ENCODE measurements at regions of chr12 and their contacts with region 1.

Region 1: DNA sequence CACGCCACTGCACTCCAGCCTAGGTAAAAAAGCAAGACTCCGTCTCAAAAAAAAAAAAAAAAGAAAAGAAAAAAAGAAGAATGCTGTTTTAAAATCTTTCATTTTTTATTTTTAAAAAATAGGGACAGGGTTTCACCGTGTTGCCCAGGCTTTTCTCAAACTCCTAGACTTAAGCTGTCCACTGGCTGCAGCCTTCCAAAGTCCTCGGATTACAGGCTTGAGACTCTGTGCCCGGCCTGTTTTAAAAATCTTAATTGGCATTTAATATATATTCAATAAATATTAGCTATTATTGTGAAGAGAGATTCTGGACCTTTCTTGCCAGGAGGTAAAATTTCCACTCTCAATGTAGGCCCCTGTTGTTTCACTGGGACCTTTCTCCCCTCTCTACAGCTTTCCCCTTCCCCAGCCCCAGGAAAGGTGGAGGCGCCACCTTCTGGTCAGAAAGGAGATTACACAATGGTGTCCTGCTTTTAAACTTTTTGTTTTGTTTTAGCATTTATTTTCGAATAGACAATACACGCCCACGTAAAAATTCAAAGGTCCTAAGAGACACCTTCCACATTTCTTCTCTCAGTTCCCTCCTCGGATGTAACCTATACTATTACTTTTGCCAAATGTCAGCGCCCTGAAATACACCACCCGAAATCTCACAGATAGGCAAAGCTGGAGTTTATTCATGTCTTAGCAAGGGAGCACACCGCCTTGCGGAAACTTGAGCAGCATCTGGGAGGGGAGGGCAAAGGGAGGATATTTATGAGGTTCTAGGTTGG is 23.8 kb upstream of the PHC1 start:
- DNase-seq: peak; percentile 17
- H3K4me3 ChIP-seq: peak overlapping the region; percentile 47 to 69 (median 48)
- H3K27ac ChIP-seq: no peak overlapping the region
- H3K4me1 ChIP-seq: no peaks in the 10 kb centered on the region
- H3K27me3 ChIP-seq: no peaks in the 10 kb centered on the region
- CTCF ChIP-seq: peak; percentile 63 to 84

Region 2: DNA sequence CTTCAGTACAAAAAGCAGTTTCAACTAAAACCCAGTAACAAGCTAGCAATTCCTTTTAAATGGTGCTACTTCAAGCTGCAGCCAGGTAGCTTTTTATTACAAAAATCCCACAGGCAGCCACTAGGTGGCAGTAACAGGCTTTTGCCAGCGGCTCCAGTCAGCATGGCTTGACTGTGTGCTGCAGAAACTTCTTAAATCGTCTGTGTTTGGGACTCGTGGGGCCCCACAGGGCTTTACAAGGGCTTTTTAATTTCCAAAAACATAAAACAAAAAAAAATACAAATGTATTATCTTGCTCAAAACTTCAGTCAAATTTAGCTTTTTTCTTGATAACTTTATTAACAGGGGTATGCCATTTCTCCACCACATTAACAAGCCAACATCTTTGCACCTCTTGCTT is 346.2 kb before region 1 on chr12:
- CTCF ChIA-PET with region 1: no interaction called
- dilution Hi-C with region 1: no loop called
- in situ Hi-C with region 1: no loop called
- intact Hi-C with region 1: loop called (anchors 1 kb)
- DNase-seq: peak; percentile 44
- H3K4me3 ChIP-seq: no peak overlapping the region
- H3K27ac ChIP-seq: no peak overlapping the region
- H3K4me1 ChIP-seq: no peaks in the 10 kb centered on the region
- H3K27me3 ChIP-seq: no peaks in the 10 kb centered on the region
- CTCF ChIP-seq: peak; percentile 74 to 85

Region 3: DNA sequence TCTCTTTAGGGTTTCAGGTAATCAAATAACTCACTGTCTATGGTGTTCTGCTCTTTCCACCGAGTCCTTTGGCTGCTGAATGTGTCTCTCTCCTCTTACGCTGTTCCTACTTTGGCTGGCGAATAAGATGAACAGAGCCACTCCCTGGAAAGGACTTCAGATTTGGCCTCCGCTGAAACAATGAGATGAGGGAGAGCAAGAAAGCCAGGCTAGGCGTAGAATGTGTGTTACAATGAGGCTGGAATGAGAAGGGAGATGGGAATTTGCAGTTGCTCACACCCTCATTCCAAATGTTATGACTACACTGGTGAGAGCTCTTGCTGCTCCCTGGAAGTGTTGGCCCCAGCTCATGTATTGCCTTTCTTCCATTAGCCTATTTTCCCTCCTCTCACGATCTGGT is 227.9 kb before region 1 on chr12 and contains the start of gene MFAP5:
- CTCF ChIA-PET with region 1: interaction called, 11 read pairs
- dilution Hi-C with region 1: no loop called
- in situ Hi-C with region 1: no loop called
- intact Hi-C with region 1: loop called (anchors 1 kb)
- DNase-seq: no peak
- H3K4me3 ChIP-seq: no peak within 1 kb of the TSS
- H3K27ac ChIP-seq: no peak within 1 kb of the TSS
- H3K4me1 ChIP-seq: peaks cover 21% of the 10 kb centered on the region
- H3K27me3 ChIP-seq: no peaks in the 10 kb centered on the region
- CTCF ChIP-seq: no peak
- total RNA-seq, gene MFAP5: 2.4 to 7.5 TPM

Region 4: GRCh38 chr12:8687846-8688601 is 202.5 kb before region 1 on chr12:
- CTCF ChIA-PET with region 1: no interaction called
- dilution Hi-C with region 1: no loop called
- in situ Hi-C with region 1: loop called in 1 of 2 experiments (anchors 10 kb)
- intact Hi-C with region 1: no loop called
- DNase-seq: peak; percentile 79
- H3K4me3 ChIP-seq: no peak overlapping the region
- H3K27ac ChIP-seq: no peak overlapping the region
- H3K4me1 ChIP-seq: peaks cover 19% of the 10 kb centered on the region
- H3K27me3 ChIP-seq: no peaks in the 10 kb centered on the region
- CTCF ChIP-seq: no peak

Region 5: GRCh38 chr12:8780389-8780788 is 110.1 kb before region 1 on chr12:
- CTCF ChIA-PET with region 1: no interaction called
- dilution Hi-C with region 1: no loop called
- in situ Hi-C with region 1: no loop called
- intact Hi-C with region 1: loop called (anchors 1 kb)
- DNase-seq: peak; percentile 40
- H3K4me3 ChIP-seq: no peak overlapping the region
- H3K27ac ChIP-seq: no peak overlapping the region
- H3K4me1 ChIP-seq: no peaks in the 10 kb centered on the region
- H3K27me3 ChIP-seq: no peaks in the 10 kb centered on the region
- CTCF ChIP-seq: peak; percentile 39 to 71

Region 6: GRCh38 chr12:8834230-8834629 is 56.3 kb before region 1 on chr12:
- CTCF ChIA-PET with region 1: interaction called, 15 read pairs
- dilution Hi-C with region 1: no loop called
- in situ Hi-C with region 1: no loop called
- intact Hi-C with region 1: no loop called
- DNase-seq: no peak
- H3K4me3 ChIP-seq: no peak overlapping the region
- H3K27ac ChIP-seq: no peak overlapping the region
- H3K4me1 ChIP-seq: peaks cover 5% of the 10 kb centered on the region
- H3K27me3 ChIP-seq: no peaks in the 10 kb centered on the region
- CTCF ChIP-seq: no peak

Region 7: DNA sequence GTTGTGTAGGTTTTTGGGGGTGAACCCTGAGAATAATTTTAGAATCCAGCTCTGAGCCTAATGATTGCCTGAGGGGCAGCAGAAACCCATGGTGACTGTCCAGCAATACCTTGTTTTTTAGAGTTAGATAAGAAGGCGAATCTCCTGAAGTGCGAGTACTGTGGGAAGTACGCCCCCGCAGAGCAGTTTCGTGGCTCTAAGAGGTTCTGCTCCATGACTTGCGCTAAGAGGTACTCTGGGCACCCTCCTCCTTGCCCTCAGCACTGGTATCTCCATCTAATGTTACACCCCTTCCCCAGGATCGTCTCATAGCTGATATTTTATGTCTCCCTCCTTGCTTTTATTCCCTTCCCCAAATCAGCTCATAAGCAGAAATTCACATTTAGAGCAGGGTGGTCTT is 46.2 kb after region 1 on chr12:
- CTCF ChIA-PET with region 1: no interaction called
- dilution Hi-C with region 1: no loop called
- in situ Hi-C with region 1: no loop called
- intact Hi-C with region 1: no loop called
- DNase-seq: no peak
- H3K4me3 ChIP-seq: no peak overlapping the region
- H3K27ac ChIP-seq: no peak overlapping the region
- H3K4me1 ChIP-seq: no peaks in the 10 kb centered on the region
- H3K27me3 ChIP-seq: no peaks in the 10 kb centered on the region
- CTCF ChIP-seq: no peak

Region 8: DNA sequence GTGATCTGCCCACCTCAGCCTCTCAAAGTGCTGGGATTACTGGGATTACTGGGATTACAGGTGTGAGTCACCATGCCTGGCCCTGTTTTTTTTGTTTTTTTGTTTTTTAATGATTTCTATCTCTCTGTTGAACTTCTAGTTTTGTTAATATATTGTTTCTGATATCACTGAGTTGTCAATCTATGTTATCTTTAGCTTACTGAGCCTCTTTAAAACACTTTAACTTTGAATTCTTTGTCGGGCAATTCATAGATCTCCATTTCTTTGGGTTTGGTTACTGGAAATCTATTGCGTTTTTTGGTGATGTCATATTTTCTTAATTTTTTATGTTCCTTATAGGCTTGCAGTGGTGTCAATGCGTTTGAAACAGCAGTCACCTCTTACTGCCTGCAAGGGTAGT is 89.6 kb after region 1 on chr12:
- CTCF ChIA-PET with region 1: no interaction called
- dilution Hi-C with region 1: no loop called
- in situ Hi-C with region 1: no loop called
- intact Hi-C with region 1: no loop called
- DNase-seq: no peak
- H3K4me3 ChIP-seq: no peak overlapping the region
- H3K27ac ChIP-seq: no peak overlapping the region
- H3K4me1 ChIP-seq: no peaks in the 10 kb centered on the region
- H3K27me3 ChIP-seq: no peaks in the 10 kb centered on the region
- CTCF ChIP-seq: no peak

Region 9: GRCh38 chr12:9049520-9050133 is 159.1 kb after region 1 on chr12:
- CTCF ChIA-PET with region 1: no interaction called
- dilution Hi-C with region 1: no loop called
- in situ Hi-C with region 1: no loop called
- intact Hi-C with region 1: loop called (anchors 10 kb)
- DNase-seq: peak; percentile 28
- H3K4me3 ChIP-seq: no peak overlapping the region
- H3K27ac ChIP-seq: no peak overlapping the region
- H3K4me1 ChIP-seq: peaks cover 6% of the 10 kb centered on the region
- H3K27me3 ChIP-seq: no peaks in the 10 kb centered on the region
- CTCF ChIP-seq: peak; percentile 50 to 54

Region 10: GRCh38 chr12:9707864-9708808 is 817.6 kb after region 1 on chr12:
- CTCF ChIA-PET with region 1: no interaction called
- dilution Hi-C with region 1: no loop called
- in situ Hi-C with region 1: no loop called
- intact Hi-C with region 1: no loop called
- DNase-seq: peak; percentile 29
- H3K4me3 ChIP-seq: no peak overlapping the region
- H3K27ac ChIP-seq: no peak overlapping the region
- H3K4me1 ChIP-seq: peaks cover 4% of the 10 kb centered on the region
- H3K27me3 ChIP-seq: no peaks in the 10 kb centered on the region
- CTCF ChIP-seq: peak; percentile 78 to 82